ENCODE measurements at regions of chr20 and their contacts with region 1.

Region 1: GRCh38 chr20:56247948-56248782 is at the start of gene MC3R:
- DNase-seq: peak; percentile 71
- ATAC-seq: no peak
- H3K4me3 Mint-ChIP-seq: no peak within 1 kb of the TSS
- H3K27ac Mint-ChIP-seq: no peak within 1 kb of the TSS
- H3K4me1 Mint-ChIP-seq: no peaks in the 10 kb centered on the region
- H3K27me3 Mint-ChIP-seq: peaks cover 31% of the 10 kb centered on the region
- total RNA-seq, gene MC3R: not detected

Region 2: GRCh38 chr20:54680872-54681619 is 1567.1 kb before region 1 on chr20:
- CTCF ChIA-PET with region 1: no interaction called
- POLR2A ChIA-PET with region 1: no interaction called
- intact Hi-C with region 1: loop called in 1 of 2 experiments (anchors 5 kb)
- DNase-seq: peak; percentile 48
- ATAC-seq: no peak
- H3K4me3 Mint-ChIP-seq: no peak overlapping the region
- H3K27ac Mint-ChIP-seq: no peak overlapping the region
- H3K4me1 Mint-ChIP-seq: no peaks in the 10 kb centered on the region
- H3K27me3 Mint-ChIP-seq: peaks cover 19% of the 10 kb centered on the region

Region 3: DNA sequence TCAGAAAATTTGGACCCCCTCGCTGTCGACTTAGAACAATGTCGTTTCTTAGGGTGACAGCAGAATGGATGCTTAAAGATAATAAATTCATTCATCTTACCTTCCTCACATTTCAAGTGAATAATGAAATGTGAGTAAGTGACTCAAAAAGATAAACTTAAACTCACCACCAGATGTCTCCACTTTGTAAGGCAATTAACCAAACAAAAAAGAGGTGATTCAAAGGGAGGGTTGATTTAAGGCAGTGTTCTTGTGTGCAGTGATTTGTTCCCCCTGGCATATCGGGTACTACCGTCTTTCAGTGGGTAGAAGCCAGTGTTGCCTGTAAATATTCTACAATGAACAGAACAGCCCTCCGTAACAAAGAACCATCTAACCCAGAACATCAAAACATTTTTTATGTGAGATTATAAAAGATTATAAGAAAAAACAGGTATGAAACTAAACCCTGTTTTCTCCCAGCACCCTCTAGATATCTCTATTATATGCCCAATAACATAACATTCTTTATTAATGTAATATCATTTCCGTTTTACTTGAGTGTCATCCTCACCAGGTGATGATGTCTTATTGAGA is 832.5 kb before region 1 on chr20:
- CTCF ChIA-PET with region 1: no interaction called
- POLR2A ChIA-PET with region 1: no interaction called
- intact Hi-C with region 1: loop called in 1 of 2 experiments (anchors 2 kb)
- DNase-seq: no peak
- ATAC-seq: no peak
- H3K4me3 Mint-ChIP-seq: no peak overlapping the region
- H3K27ac Mint-ChIP-seq: no peak overlapping the region
- H3K4me1 Mint-ChIP-seq: no peaks in the 10 kb centered on the region
- H3K27me3 Mint-ChIP-seq: no peaks in the 10 kb centered on the region

Region 4: DNA sequence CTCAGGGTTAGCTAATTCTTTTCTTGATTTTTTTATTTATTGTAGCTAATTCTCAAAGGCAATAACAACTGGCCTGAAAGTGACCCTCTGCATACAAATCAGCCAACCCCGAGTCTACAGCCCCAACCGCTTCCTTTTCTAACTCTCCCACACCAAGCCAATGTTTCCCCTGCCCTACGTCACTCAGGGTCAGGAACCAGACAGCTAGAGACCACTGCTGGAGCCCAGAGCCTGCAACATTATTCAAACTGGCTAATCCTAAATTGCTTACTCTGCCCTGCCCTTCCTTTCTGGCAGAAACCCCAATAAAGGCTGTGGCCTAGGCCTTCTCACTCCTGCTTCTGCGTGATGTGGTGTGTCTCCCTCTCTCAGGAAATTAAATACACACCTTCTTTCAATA is 563.6 kb before region 1 on chr20:
- CTCF ChIA-PET with region 1: no interaction called
- POLR2A ChIA-PET with region 1: no interaction called
- intact Hi-C with region 1: no loop called
- DNase-seq: no peak
- ATAC-seq: no peak
- H3K4me3 Mint-ChIP-seq: no peak overlapping the region
- H3K27ac Mint-ChIP-seq: no peak overlapping the region
- H3K4me1 Mint-ChIP-seq: no peaks in the 10 kb centered on the region
- H3K27me3 Mint-ChIP-seq: peaks cover 2% of the 10 kb centered on the region

Region 5: GRCh38 chr20:56343861-56344381 is 95.8 kb after region 1 on chr20:
- CTCF ChIA-PET with region 1: interaction called, 4 read pairs
- POLR2A ChIA-PET with region 1: no interaction called
- intact Hi-C with region 1: loop called (anchors 1 to 2 kb)
- DNase-seq: peak; percentile 77
- ATAC-seq: peak; percentile 88
- H3K4me3 Mint-ChIP-seq: no peak overlapping the region
- H3K27ac Mint-ChIP-seq: no peak overlapping the region
- H3K4me1 Mint-ChIP-seq: peaks cover 2% of the 10 kb centered on the region
- H3K27me3 Mint-ChIP-seq: peaks cover 49% of the 10 kb centered on the region

Region 6: DNA sequence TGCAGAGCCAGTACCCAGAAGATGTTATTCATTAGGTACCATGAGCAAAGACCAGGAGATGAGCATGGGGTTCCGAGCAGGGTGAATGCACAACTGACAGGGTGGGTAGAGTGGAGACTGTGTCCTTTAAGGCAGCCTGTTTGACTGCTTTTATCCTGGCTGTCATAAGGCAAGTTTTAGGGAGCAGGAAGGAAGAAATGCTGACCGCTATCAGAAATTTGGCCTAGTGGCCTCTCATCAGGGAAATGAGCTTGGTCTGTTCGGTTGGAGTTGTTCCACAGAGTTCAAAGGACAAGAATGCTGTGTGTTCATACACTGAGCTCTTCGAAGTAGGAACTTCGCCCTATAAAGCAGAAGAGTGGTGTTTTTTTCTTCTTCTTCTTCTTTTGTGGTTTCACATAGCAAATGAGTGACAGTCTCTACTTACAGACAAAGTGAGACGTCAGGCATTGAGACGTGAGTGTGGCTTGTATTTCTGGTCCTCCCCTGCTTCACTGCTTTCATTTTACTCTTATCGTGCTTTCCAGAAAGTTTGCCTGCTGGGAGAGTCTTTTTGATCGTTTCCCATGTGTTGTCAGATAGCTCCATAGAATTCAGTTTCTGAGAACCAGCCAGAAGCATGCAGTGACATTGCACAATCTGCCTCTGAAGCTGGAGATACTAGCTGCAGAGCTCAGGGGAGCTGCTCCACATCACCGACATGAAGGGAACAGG is 163.8 kb after region 1 on chr20 and contains the start of gene CASS4:
- CTCF ChIA-PET with region 1: no interaction called
- POLR2A ChIA-PET with region 1: no interaction called
- intact Hi-C with region 1: no loop called
- DNase-seq: peak; percentile 63
- ATAC-seq: peak; percentile 53
- H3K4me3 Mint-ChIP-seq: peak within 1 kb of the TSS; percentile 69
- H3K27ac Mint-ChIP-seq: peak within 1 kb of the TSS; percentile 94
- H3K4me1 Mint-ChIP-seq: peaks cover 47% of the 10 kb centered on the region
- H3K27me3 Mint-ChIP-seq: no peaks in the 10 kb centered on the region
- total RNA-seq, gene CASS4: 5.1 to 5.6 TPM

Region 7: DNA sequence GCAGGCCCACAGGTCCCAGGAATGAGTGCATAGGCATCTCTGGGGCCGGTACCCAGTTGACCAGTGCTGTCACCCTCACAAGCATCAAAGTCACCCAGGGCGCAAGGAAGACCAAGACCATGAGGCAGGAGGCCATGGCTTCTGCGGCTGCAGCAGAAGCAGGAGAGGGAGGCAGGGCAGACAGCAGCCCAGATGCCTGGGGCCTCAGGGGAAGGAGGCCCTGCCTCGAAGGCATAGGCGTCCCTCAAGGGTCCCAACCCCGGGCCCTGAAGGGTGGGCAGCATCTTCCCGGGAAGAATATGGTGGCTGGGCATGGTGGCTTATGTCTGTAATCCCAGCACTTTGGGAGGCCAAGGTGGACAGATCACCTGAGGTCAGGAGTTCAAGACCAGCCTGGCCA is 279.4 kb after region 1 on chr20:
- CTCF ChIA-PET with region 1: no interaction called
- POLR2A ChIA-PET with region 1: interaction called, 11 read pairs
- intact Hi-C with region 1: no loop called
- DNase-seq: no peak
- ATAC-seq: no peak
- H3K4me3 Mint-ChIP-seq: no peak overlapping the region
- H3K27ac Mint-ChIP-seq: no peak overlapping the region
- H3K4me1 Mint-ChIP-seq: peaks cover 6% of the 10 kb centered on the region
- H3K27me3 Mint-ChIP-seq: no peaks in the 10 kb centered on the region